Endothelial cell of umbilical vein (primary cell): ENCODE measurements at regions of chr4 and their contacts with region 1.

Region 1: GRCh38 chr4:73127839-73128453 is 58.4 kb upstream of the COX18 start:
- DNase-seq: peak; percentile 17
- H3K4me3 ChIP-seq: no peak overlapping the region
- H3K27ac ChIP-seq: no peak overlapping the region
- H3K4me1 ChIP-seq: peaks cover 9% of the 10 kb centered on the region
- H3K27me3 ChIP-seq: no peaks in the 10 kb centered on the region
- CTCF ChIP-seq: peak; percentile 6 to 28
- POLR2A ChIP-seq: no peak

Region 2: DNA sequence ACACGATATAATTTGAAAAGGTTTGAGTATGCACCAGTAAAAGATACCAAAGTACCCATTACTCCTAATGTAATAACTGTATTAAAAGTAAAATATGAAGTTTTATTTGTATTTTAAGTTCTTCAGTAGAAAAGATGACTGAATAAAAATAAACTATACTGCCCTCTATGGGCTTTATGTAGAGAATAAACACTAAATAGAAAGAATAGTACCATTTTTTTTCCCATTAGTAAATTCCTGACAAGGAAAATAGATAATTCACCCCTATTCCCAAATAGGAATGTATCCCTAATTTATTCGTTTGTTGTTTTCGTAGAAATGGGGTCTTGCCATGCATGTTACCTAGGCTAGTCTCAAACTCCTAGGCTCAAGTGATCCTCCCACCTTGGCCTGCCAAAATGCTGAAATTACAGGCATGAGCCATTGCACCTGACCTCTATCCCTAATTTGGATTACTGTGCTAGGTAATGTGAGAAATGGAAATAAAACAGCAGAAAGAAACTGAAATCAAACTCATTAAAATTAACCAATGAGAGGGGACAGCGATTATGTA is 15.1 kb after region 1 on chr4:
- CTCF ChIA-PET with region 1: interaction called, 12 read pairs
- POLR2A ChIA-PET with region 1: interaction called, 3 read pairs
- dilution Hi-C with region 1: no loop called
- intact Hi-C with region 1: no loop called
- DNase-seq: peak; percentile 8
- H3K4me3 ChIP-seq: no peak overlapping the region
- H3K27ac ChIP-seq: no peak overlapping the region
- H3K4me1 ChIP-seq: no peaks in the 10 kb centered on the region
- H3K27me3 ChIP-seq: no peaks in the 10 kb centered on the region
- CTCF ChIP-seq: peak in 1 of 2 donors; percentile 11
- POLR2A ChIP-seq: no peak

Region 3: GRCh38 chr4:73161527-73162185 is 33.7 kb after region 1 on chr4:
- CTCF ChIA-PET with region 1: no interaction called
- POLR2A ChIA-PET with region 1: no interaction called
- dilution Hi-C with region 1: no loop called
- intact Hi-C with region 1: no loop called
- DNase-seq: no peak
- H3K4me3 ChIP-seq: no peak overlapping the region
- H3K27ac ChIP-seq: no peak overlapping the region
- H3K4me1 ChIP-seq: no peaks in the 10 kb centered on the region
- H3K27me3 ChIP-seq: no peaks in the 10 kb centered on the region
- CTCF ChIP-seq: no peak
- POLR2A ChIP-seq: no peak